Gastrocnemius medialis (tissue), 4 donors: ENCODE measurements at regions of chrX and their contacts with region 1.

Region 1: DNA sequence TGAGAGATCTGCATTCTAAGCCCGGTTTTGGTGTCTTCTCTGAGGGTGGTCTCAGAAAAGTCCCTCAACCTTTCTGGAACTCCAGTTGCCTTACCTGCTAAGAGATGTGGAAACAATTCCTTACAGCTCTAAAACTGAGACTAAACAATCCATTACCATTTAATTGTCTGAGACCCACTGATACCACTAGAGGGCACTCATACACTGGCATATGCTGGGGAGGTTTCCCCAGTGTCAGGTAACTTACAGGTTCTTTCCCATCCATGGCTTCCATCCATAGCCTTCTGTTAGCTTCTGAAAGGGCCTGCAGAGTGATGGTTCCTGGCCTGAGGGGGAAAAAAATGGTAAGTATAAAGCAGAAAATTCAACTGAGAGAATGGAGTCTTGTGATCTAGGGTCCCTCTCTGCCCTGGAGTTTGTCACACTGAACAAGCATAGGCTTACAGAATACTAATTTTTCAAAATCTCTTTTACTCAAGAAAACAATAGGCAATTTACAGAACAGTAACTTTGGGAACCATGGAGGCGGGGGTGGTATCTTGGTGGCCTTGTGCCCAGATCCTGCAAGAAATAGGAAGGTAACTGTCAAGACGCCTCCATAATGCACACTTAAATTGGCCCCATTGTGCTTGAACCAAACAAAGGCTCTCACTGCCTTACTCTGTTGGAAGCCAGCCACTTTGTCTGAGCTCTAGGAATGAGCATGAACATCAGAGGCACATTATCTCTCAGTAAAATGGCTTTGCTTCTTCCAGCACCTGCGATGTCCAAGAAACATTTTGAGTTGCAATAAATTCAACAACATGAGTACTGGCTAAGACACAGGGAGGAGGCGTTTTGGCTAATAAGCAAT is 236.1 kb downstream of the OPHN1 start:
- DNase-seq: no peak
- ATAC-seq: peak; percentile 69 to 73
- H3K4me3 ChIP-seq: no peak overlapping the region
- H3K27ac ChIP-seq: no peak overlapping the region
- H3K4me1 ChIP-seq: no peaks in the 10 kb centered on the region
- H3K27me3 ChIP-seq: no peaks in the 10 kb centered on the region
- CTCF ChIP-seq: peak; percentile 54 to 66 (median 61)
- POLR2A ChIP-seq: no peak

Region 2: DNA sequence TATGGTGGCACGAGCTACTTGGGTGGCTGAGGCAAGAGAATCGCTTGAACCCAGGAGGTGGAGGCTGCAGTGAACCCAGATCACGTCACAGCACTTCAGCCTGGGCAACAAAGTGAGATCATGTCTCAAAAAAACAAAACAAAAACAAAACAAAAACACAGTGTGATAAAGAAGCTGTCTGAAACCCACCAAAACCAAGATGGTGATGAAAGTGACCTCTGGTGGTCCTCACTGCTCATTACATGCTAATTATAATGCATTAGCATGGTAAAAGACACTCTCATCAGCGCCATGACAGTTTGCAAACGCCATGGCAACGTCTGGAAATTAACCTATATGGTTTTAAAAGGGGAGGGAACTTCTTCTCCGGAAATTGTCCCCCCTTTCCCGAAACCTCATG is 265.5 kb after region 1 on chrX:
- in situ Hi-C with region 1: loop called (anchors 5 to 10 kb)
- intact Hi-C with region 1: loop called (anchors 1 kb)
- DNase-seq: no peak
- ATAC-seq: peak in 1 of 2 donors; percentile 46
- H3K4me3 ChIP-seq: no peak overlapping the region
- H3K27ac ChIP-seq: no peak overlapping the region
- H3K4me1 ChIP-seq: no peaks in the 10 kb centered on the region
- H3K27me3 ChIP-seq: no peaks in the 10 kb centered on the region
- CTCF ChIP-seq: peak; percentile 16 to 59 (median 53)
- POLR2A ChIP-seq: no peak